SK-N-SH (cell line): ENCODE measurements at regions of chr9 and their contacts with region 1.

Region 1: DNA sequence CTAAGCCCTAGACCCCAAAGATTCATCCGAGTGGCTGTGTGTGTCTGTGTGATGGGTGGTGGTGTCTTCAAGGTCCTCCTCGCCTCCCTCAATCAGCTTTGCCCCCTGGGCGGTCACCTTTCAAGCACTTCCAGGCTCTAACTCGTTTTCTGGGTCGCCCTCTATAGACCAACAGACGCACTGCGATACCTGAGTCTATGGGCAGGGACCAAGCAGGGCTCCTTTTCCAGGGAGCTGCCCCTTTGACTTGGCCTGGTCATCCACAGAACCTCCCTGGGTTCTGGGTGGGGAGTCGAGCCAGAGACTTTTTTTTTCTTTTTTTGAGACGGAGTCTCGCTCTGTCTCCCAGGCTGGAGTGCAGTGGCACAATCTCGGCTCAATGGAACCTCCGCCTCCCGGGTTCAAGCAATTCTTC is 1.1 kb downstream of the SLC27A4 start:
- DNase-seq: peak; percentile 84
- H3K4me3 ChIP-seq: peak overlapping the region; percentile 73 to 89
- H3K27ac ChIP-seq: peak overlapping the region in 1 of 2 experiments; percentile 20; a peak in 2 of 4 replicates
- H3K4me1 ChIP-seq: peaks cover 0 to 6% of the 10 kb centered on the region in 2 experiments; a peak in 1 of 4 replicates
- H3K27me3 ChIP-seq: no peaks in the 10 kb centered on the region
- CTCF ChIP-seq: peak; percentile 66
- EP300 ChIP-seq: no peak
- RAD21 ChIP-seq: peak; percentile 64

Region 2: DNA sequence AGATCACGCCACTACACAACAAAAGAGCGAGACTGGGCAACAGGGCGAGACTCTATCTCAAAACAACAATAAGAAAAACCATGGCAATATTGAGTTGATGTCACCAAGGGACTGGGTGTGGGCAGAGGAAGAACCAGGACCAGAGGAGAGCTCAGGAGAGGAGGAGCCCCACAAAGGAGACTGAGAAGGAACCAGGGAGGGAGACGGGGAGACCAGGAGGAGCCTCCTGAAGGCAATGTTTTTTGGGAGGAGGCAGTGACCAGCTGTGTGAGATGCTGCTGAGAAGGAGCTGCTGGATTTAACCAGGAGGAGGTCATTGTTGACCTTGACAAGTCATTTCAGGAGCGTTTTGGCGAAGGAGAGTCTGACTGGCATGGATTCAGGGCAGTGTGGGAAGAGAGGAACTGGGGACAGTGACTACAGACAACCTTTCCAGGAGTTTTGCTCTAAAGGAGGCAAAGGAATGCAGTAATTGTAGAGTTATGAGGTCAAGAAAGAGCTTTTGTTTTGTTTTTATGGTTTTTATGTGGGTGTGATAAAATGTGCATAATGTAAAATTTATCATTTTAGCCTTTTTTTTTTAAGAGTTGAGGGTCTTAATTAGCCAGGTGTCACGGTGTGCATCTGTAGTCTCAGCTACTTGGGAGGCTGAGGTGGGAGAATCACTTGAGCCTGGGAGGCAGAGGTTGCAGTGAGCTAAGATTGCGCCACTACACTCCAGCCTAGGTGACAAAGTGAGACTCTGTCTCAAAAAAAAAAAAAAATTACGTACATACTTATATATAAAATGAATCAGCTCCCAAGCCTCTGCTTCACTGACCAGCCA is 37.1 kb before region 1 on chr9:
- CTCF ChIA-PET with region 1: interaction called, 80 read pairs
- POLR2A ChIA-PET with region 1: no interaction called
- DNase-seq: no peak
- H3K4me3 ChIP-seq: no peak overlapping the region
- H3K27ac ChIP-seq: no peak overlapping the region
- H3K4me1 ChIP-seq: peaks cover 0 to 12% of the 10 kb centered on the region in 2 experiments; a peak in 1 of 4 replicates
- H3K27me3 ChIP-seq: no peaks in the 10 kb centered on the region
- CTCF ChIP-seq: no peak
- EP300 ChIP-seq: no peak
- RAD21 ChIP-seq: no peak

Region 3: GRCh38 chr9:128321879-128322403 is 19.5 kb before region 1 on chr9:
- CTCF ChIA-PET with region 1: interaction called, 21 read pairs
- POLR2A ChIA-PET with region 1: no interaction called
- DNase-seq: no peak
- H3K4me3 ChIP-seq: peak overlapping the region; percentile 75 to 96
- H3K27ac ChIP-seq: peak overlapping the region; percentile 87 to 95; a peak in 3 of 4 replicates
- H3K4me1 ChIP-seq: peaks cover 11% of the 10 kb centered on the region in 2 experiments; a peak in 3 of 4 replicates
- H3K27me3 ChIP-seq: no peaks in the 10 kb centered on the region
- CTCF ChIP-seq: no peak
- EP300 ChIP-seq: no peak
- RAD21 ChIP-seq: no peak

Region 4: GRCh38 chr9:128355451-128355850 is 14.0 kb after region 1 on chr9:
- CTCF ChIA-PET with region 1: interaction called, 22 read pairs
- POLR2A ChIA-PET with region 1: no interaction called
- DNase-seq: no peak
- H3K4me3 ChIP-seq: no peak overlapping the region
- H3K27ac ChIP-seq: no peak overlapping the region
- H3K4me1 ChIP-seq: no peaks in the 10 kb centered on the region
- H3K27me3 ChIP-seq: no peaks in the 10 kb centered on the region
- CTCF ChIP-seq: no peak
- EP300 ChIP-seq: no peak
- RAD21 ChIP-seq: no peak

Region 5: DNA sequence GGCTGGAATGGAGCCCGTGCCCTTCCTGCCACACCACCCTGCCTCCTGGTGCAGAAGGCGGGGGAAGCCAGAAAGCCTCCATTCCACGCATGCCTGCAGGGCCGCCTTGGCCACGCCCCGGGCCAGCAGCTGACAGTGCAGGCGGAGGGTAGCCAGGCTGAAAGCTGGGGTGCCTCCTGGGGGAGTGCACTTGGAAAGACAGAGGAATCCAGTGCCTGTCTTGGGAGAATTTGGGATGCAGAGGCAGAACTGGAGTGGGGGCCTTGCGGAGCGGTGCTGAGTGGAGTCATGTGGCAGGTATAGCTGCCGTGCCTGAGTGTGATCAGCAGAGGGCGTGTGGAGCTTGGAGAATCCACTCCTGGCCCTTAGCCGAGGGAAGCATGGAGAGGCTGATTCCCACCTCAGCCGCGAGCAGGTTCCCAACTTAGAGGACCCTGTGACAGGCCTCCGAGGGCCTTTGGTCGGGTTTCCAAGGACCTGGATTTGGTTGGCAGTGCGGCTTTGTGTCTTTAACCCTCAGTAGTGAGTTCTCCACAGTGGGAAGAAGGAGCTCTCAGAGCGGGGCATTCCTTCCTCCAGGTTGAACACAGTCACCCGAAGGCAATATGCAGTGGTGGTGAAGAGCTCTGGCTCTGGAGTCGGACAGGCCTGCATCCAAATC is 20.7 kb after region 1 on chr9:
- CTCF ChIA-PET with region 1: interaction called, 12 read pairs
- POLR2A ChIA-PET with region 1: interaction called, 3 read pairs
- DNase-seq: peak; percentile 92
- H3K4me3 ChIP-seq: peak overlapping the region; percentile 43 to 58
- H3K27ac ChIP-seq: peak overlapping the region; percentile 29 to 72; a peak in 3 of 4 replicates
- H3K4me1 ChIP-seq: peaks cover 7 to 8% of the 10 kb centered on the region in 2 experiments; a peak in 2 of 4 replicates
- H3K27me3 ChIP-seq: no peaks in the 10 kb centered on the region
- CTCF ChIP-seq: peak; percentile 90
- EP300 ChIP-seq: no peak
- RAD21 ChIP-seq: peak; percentile 86

Region 6: DNA sequence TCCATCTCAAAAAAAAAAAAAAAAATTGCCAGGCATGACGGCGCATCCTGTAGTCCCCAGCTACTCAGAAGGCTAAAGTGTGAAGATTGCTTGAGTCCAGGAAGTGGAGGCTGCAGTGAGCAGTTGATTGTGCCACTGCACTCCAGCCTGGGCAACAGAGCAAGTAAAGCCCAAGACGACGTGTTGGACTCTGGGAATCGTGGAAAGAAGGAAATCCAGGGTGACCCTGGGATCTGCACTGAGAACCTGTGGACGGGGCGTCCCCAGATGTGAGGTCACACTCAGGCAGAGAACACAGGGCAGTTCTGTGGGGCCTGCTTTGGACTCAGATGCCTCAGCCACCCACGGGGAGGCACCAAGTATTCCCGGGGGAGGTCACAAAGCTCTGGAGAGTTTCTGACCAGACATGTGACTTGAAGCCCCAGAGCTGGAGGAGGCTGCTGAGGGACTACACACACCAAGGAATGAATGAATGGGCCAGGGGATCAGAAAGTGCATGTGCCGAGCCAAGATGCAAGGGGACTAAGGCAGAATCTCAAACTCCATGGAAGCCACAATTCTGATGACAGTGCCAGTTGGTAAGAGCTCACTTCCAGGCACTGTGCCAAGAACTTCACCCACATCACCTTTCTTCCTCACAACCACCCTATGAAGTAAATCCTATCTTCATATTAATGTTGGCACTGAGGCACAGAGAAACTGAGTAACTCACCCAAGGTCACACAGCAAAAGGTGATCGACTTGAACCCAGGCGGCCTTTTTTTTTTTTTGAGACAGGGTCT is 302.3 kb after region 1 on chr9:
- CTCF ChIA-PET with region 1: no interaction called
- POLR2A ChIA-PET with region 1: no interaction called
- DNase-seq: no peak
- H3K4me3 ChIP-seq: no peak overlapping the region
- H3K27ac ChIP-seq: no peak overlapping the region
- H3K4me1 ChIP-seq: no peaks in the 10 kb centered on the region
- H3K27me3 ChIP-seq: no peaks in the 10 kb centered on the region
- CTCF ChIP-seq: no peak
- EP300 ChIP-seq: no peak
- RAD21 ChIP-seq: no peak